B cell (primary cell): ENCODE measurements at regions of chr17 and their contacts with region 1.

Region 1: GRCh38 chr17:28074010-28074409 is 31.5 kb downstream of the NLK start:
- DNase-seq: no peak
- ATAC-seq: no peak
- H3K4me3 ChIP-seq: no peak overlapping the region
- H3K4me3 Mint-ChIP-seq: peak overlapping the region; percentile 40
- H3K27ac ChIP-seq: no peak overlapping the region
- H3K27ac Mint-ChIP-seq: no peak overlapping the region
- H3K4me1 ChIP-seq: peaks cover 28 to 46% of the 10 kb centered on the region in 2 donors
- H3K4me1 Mint-ChIP-seq: peaks cover 68% of the 10 kb centered on the region
- H3K27me3 ChIP-seq: no peaks in the 10 kb centered on the region
- H3K27me3 Mint-ChIP-seq: no peaks in the 10 kb centered on the region
- CTCF ChIP-seq: no peak

Region 2: GRCh38 chr17:28057731-28058279 is 16.2 kb before region 1 on chr17:
- CTCF ChIA-PET with region 1: interaction called, 4 read pairs
- POLR2A ChIA-PET with region 1: interaction called, 3 read pairs
- intact Hi-C with region 1: loop called (anchors 2 kb)
- DNase-seq: peak; percentile 43
- ATAC-seq: peak; percentile 45
- H3K4me3 ChIP-seq: no peak overlapping the region
- H3K4me3 Mint-ChIP-seq: peak overlapping the region; percentile 37
- H3K27ac ChIP-seq: peak overlapping the region in 1 of 2 donors; percentile 15
- H3K27ac Mint-ChIP-seq: no peak overlapping the region
- H3K4me1 ChIP-seq: peaks cover 15 to 18% of the 10 kb centered on the region in 2 donors
- H3K4me1 Mint-ChIP-seq: peaks cover 47% of the 10 kb centered on the region
- H3K27me3 ChIP-seq: no peaks in the 10 kb centered on the region
- H3K27me3 Mint-ChIP-seq: no peaks in the 10 kb centered on the region
- CTCF ChIP-seq: no peak